ENCODE measurements at regions of chr2 and their contacts with region 1.

Region 1: DNA sequence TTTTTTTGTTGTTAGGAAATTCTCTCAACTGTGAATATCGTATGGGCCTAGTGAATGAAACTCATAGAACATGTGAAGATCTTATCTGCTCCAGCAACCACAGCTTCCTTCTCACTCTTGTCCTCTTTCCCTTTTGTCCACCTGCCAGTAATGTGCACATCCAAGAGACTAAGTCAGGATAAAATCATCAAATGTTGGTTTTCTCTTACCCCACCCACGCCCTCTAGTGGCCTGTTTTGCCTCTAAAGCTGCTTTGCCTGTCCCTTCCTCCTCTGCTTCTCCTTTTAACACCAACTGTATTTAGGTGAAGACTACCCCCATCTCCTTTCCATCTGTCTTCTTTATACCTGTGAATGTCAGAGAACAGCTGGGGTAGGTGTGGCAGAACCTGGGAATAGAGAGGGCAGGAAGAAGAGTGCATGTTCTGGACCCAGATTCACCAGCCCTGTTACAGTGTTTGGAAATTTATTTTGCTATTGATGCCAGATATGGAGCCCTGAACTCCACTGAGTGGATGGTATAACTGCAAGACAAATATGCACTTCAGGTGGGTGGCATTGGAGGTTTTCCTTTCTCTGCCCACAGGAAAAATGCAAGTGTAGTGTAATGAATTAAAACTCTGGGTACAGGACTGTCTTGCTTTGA is 8.4 kb upstream of the MGAT5 start:
- DNase-seq: peak; percentile 87
- ATAC-seq: peak; percentile 37
- H3K4me3 Mint-ChIP-seq: no peak overlapping the region
- H3K27ac Mint-ChIP-seq: no peak overlapping the region
- H3K4me1 Mint-ChIP-seq: peaks cover 82% of the 10 kb centered on the region
- H3K27me3 Mint-ChIP-seq: no peaks in the 10 kb centered on the region

Region 2: GRCh38 chr2:134070281-134070747 is 175.1 kb before region 1 on chr2:
- CTCF ChIA-PET with region 1: no interaction called
- POLR2A ChIA-PET with region 1: no interaction called
- intact Hi-C with region 1: no loop called
- DNase-seq: no peak
- ATAC-seq: no peak
- H3K4me3 Mint-ChIP-seq: no peak overlapping the region
- H3K27ac Mint-ChIP-seq: no peak overlapping the region
- H3K4me1 Mint-ChIP-seq: no peaks in the 10 kb centered on the region
- H3K27me3 Mint-ChIP-seq: peaks cover 4% of the 10 kb centered on the region

Region 3: DNA sequence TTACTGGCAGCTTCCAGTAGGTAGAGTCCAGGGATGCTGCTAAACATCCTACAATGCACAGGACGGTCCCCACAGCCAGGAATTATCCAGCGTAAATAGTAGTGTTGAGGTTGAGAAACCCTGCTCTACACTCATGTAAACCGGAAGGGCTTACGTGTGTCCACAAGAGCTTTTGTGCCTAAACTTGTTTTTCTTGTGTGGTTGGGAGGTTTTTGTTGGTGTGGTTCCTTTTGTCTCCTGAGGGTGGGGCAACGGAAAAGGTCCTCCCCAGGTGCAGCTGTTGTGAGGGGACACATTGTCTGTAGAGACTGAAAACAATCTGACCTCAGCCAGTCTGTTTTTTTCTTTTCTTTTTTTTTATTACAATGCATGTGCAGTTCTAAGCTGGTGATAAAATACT is 64.3 kb before region 1 on chr2:
- CTCF ChIA-PET with region 1: interaction called, 12 read pairs
- POLR2A ChIA-PET with region 1: no interaction called
- intact Hi-C with region 1: no loop called
- DNase-seq: peak; percentile 30
- ATAC-seq: peak; percentile 67
- H3K4me3 Mint-ChIP-seq: no peak overlapping the region
- H3K27ac Mint-ChIP-seq: peak overlapping the region; percentile 66
- H3K4me1 Mint-ChIP-seq: peaks cover 77% of the 10 kb centered on the region
- H3K27me3 Mint-ChIP-seq: no peaks in the 10 kb centered on the region

Region 4: GRCh38 chr2:134198006-134198634 is 47.3 kb before region 1 on chr2:
- CTCF ChIA-PET with region 1: interaction called, 20 read pairs
- POLR2A ChIA-PET with region 1: no interaction called
- intact Hi-C with region 1: no loop called
- DNase-seq: no peak
- ATAC-seq: peak; percentile 68
- H3K4me3 Mint-ChIP-seq: peak overlapping the region; percentile 25
- H3K27ac Mint-ChIP-seq: peak overlapping the region; percentile 90
- H3K4me1 Mint-ChIP-seq: peaks cover 80% of the 10 kb centered on the region
- H3K27me3 Mint-ChIP-seq: no peaks in the 10 kb centered on the region

Region 5: DNA sequence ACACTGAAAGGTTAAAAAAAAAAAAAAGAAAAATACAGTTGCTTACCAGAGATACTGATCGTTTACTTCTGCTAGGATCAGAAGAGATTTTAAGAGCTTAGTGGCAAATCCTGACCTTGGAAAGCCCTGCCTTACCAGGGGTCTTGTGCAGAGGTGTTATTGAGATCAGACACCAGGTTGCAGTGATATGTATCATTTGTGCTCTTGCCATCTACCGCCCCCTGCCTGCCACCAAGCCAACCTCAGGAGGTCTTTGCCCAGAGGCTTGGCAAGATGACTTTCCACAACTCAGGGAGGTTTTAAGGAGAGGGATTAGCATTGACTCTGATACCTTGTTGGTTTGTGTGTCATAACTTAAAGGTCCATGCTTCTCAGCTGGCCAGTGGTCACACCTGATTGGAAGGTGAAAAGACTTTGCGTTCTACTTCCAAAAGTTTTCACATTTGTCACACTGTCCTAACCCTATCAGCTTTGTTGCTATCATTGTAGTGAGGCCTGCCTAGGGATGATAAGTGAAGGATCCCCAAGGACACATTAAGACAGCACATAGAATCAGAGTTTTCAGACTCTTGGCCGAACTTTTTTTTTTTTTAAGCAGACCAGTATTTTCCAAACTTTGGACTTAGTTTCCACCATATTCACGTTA is 37.8 kb before region 1 on chr2:
- CTCF ChIA-PET with region 1: interaction called, 17 read pairs
- POLR2A ChIA-PET with region 1: no interaction called
- intact Hi-C with region 1: no loop called
- DNase-seq: peak; percentile 82
- ATAC-seq: peak; percentile 87
- H3K4me3 Mint-ChIP-seq: no peak overlapping the region
- H3K27ac Mint-ChIP-seq: no peak overlapping the region
- H3K4me1 Mint-ChIP-seq: peaks cover 6% of the 10 kb centered on the region
- H3K27me3 Mint-ChIP-seq: no peaks in the 10 kb centered on the region

Region 6: GRCh38 chr2:134359367-134360081 is 114.1 kb after region 1 on chr2:
- CTCF ChIA-PET with region 1: no interaction called
- POLR2A ChIA-PET with region 1: no interaction called
- intact Hi-C with region 1: no loop called
- DNase-seq: no peak
- ATAC-seq: no peak
- H3K4me3 Mint-ChIP-seq: no peak overlapping the region
- H3K27ac Mint-ChIP-seq: no peak overlapping the region
- H3K4me1 Mint-ChIP-seq: peaks cover 2% of the 10 kb centered on the region
- H3K27me3 Mint-ChIP-seq: no peaks in the 10 kb centered on the region

Region 7: GRCh38 chr2:134411828-134412638 is 166.6 kb after region 1 on chr2:
- CTCF ChIA-PET with region 1: interaction called, 16 read pairs
- POLR2A ChIA-PET with region 1: no interaction called
- intact Hi-C with region 1: loop called (anchors 2 to 5 kb)
- DNase-seq: peak; percentile 82
- ATAC-seq: peak; percentile 98
- H3K4me3 Mint-ChIP-seq: no peak overlapping the region
- H3K27ac Mint-ChIP-seq: no peak overlapping the region
- H3K4me1 Mint-ChIP-seq: peaks cover 41% of the 10 kb centered on the region
- H3K27me3 Mint-ChIP-seq: no peaks in the 10 kb centered on the region

Measured in activated CD4-positive, alpha-beta T cell treated with anti-CD3 and anti-CD28 coated beads for 36 hours (primary cell).